ENCODE measurements at regions of chr16 and their contacts with region 1.

Region 1: DNA sequence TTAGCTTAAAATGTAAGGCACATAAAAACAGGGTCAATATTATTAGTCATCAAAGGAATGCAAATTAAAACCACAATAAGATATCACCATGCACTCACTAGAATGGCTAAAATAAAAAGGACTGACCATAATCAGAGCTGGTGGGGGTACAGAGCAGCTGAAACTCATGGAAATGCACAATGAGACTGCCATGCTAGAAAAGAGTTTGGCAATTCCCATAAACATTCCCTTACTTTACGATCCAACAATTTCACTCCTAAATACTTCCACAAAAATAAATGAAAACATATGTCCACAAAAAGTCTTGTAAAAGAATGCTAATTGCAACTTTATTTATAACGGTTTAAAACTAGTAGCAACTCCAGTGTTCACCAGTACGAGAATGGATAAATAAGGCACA is 36.1 kb upstream of the ERCC4 start:
- DNase-seq: no peak
- H3K4me3 ChIP-seq: no peak overlapping the region
- H3K27ac ChIP-seq: no peak overlapping the region
- H3K4me1 ChIP-seq: no peaks in the 10 kb centered on the region
- H3K27me3 ChIP-seq: peaks cover 16% of the 10 kb centered on the region
- CTCF ChIP-seq: no peak

Region 2: GRCh38 chr16:11949527-11949926 is 1934.4 kb before region 1 on chr16:
- CTCF ChIA-PET with region 1: no interaction called
- POLR2A ChIA-PET with region 1: interaction called, 25 read pairs
- intact Hi-C with region 1: no loop called
- DNase-seq: peak; percentile 68
- H3K4me3 ChIP-seq: no peak overlapping the region
- H3K27ac ChIP-seq: no peak overlapping the region
- H3K4me1 ChIP-seq: no peaks in the 10 kb centered on the region
- H3K27me3 ChIP-seq: no peaks in the 10 kb centered on the region
- CTCF ChIP-seq: peak; percentile 50

Region 3: GRCh38 chr16:13779676-13780075 is 104.2 kb before region 1 on chr16:
- CTCF ChIA-PET with region 1: no interaction called
- POLR2A ChIA-PET with region 1: no interaction called
- intact Hi-C with region 1: no loop called
- DNase-seq: no peak
- H3K4me3 ChIP-seq: no peak overlapping the region
- H3K27ac ChIP-seq: no peak overlapping the region
- H3K4me1 ChIP-seq: no peaks in the 10 kb centered on the region
- H3K27me3 ChIP-seq: no peaks in the 10 kb centered on the region
- CTCF ChIP-seq: no peak

Region 4: GRCh38 chr16:14042706-14043105 is 158.8 kb after region 1 on chr16:
- CTCF ChIA-PET with region 1: no interaction called
- POLR2A ChIA-PET with region 1: no interaction called
- intact Hi-C with region 1: no loop called
- DNase-seq: no peak
- H3K4me3 ChIP-seq: no peak overlapping the region
- H3K27ac ChIP-seq: no peak overlapping the region
- H3K4me1 ChIP-seq: no peaks in the 10 kb centered on the region
- H3K27me3 ChIP-seq: no peaks in the 10 kb centered on the region
- CTCF ChIP-seq: no peak

Region 5: DNA sequence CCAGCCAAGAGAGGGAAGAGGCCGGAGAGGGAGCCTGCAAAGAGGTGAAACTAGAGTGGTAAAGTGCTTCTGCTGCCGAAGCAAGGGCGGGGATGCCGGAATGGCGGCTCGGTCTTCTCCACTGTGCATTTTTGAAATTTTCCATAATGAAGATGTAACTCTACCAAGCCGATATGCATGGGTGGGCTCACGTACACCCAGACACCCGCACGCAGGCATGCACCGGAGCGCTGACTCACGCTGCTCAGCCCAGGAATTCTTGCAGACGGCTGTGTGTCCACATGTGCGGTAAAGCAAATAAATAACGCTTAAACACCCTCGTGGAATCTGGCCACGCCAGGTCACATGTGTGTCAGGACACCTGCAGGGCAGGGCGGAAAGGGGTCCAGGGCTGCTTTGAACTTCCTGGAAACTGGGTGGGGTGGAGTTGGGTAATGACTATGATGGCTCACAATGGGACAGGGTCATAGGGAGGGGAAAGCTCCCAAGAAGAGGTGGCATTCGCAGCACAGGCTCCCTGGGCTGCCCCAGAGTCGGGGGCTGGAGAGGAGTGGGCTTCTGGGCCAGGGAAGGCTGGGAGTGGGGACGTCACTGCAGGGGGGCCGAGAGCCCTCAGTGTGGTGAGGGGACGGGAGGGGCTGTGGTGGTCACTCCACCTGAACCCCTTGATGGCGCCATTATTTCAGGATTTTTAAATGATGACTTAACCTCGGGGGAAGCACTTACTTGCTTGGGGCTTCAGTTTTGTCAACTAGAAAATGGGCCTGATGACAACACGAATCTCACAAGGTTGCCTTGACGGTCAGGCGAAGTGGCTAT is 480.7 kb after region 1 on chr16:
- CTCF ChIA-PET with region 1: no interaction called
- POLR2A ChIA-PET with region 1: no interaction called
- intact Hi-C with region 1: no loop called
- DNase-seq: no peak
- H3K4me3 ChIP-seq: no peak overlapping the region
- H3K27ac ChIP-seq: no peak overlapping the region
- H3K4me1 ChIP-seq: no peaks in the 10 kb centered on the region
- H3K27me3 ChIP-seq: no peaks in the 10 kb centered on the region
- CTCF ChIP-seq: no peak